ENCODE measurements at regions of chr11 and their contacts with region 1.

Region 1: DNA sequence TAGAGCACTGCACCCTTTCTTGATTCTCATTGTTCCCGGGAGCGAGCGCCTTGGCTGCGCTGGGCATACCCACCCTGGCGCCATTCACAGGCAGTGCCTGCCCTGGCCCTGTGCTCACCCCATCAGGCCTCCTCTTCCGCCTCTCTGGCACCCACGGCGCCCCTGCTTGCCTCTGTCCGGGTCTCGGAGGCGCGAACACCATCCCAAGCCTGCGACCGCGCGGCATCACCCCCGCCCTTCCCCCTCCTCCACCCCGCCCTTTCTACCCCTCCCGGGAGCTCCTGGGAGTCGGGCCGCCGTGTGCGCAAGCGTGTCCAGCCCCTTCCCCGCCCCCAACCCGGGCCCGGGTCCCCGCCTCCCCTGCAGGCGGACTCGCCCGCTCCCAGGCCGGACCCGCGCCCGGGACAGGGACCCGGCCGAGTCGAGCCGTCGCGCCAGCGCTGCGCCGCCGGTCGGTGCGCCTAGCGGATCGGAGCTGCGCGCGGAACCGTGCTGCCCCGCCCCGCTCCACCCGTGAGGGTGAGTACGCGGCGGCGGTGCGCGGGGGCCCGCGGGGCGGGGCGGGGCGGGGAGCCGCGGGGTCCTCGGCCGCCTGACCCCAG is at the start of gene ST3GAL4:
- DNase-seq: peak; percentile 79
- ATAC-seq: peak; percentile 80
- H3K4me3 Mint-ChIP-seq: peak within 1 kb of the TSS; percentile 95
- H3K27ac Mint-ChIP-seq: peak within 1 kb of the TSS; percentile 90
- H3K4me1 Mint-ChIP-seq: peaks cover 33% of the 10 kb centered on the region
- H3K27me3 Mint-ChIP-seq: no peaks in the 10 kb centered on the region
- total RNA-seq, gene ST3GAL4: 6.3 to 8.5 TPM

Region 2: GRCh38 chr11:126175393-126175792 is 180.0 kb before region 1 on chr11:
- POLR2A ChIA-PET with region 1: no interaction called
- DNase-seq: no peak
- ATAC-seq: no peak
- H3K4me3 Mint-ChIP-seq: no peak overlapping the region
- H3K27ac Mint-ChIP-seq: no peak overlapping the region
- H3K4me1 Mint-ChIP-seq: peaks cover 9% of the 10 kb centered on the region
- H3K27me3 Mint-ChIP-seq: no peaks in the 10 kb centered on the region

Region 3: DNA sequence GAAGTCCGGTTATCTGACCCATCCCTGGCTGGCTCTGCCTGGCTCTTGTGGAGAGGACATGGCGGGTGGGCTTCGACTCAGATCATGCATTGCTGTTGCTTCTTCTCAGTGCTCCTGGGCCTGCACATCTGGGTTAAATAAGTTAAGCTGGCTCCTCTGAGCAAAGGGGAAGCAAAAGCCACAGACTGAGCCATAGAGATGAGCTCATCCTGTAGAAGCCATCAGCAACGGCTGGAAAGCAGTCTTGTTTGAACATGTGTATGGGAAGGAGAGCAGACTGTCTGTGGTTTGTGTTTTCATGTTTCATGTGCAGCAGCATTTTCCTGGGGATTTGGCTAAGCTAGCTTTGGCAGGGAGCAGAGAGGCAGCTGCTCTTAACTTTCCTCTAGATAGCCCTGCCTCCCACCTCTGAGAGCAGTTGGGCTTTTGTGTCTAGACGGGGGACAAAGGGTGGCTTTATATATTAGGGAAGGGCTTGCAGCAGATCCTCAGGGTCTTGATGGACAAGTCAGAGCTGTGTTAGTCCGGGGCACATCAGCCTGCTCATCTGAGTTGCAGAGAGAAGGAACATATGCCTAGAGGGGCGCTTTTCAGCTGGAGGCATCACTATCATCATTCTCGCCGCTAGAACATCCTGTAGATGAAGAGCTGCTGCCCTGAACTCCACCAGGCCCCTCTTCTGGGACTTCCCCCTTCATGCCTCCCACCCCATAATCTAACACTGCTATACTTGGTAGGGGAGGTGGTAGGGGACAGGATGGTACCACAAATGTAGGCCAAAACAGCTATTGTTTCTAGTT is 36.7 kb before region 1 on chr11:
- POLR2A ChIA-PET with region 1: interaction called, 61 read pairs
- DNase-seq: peak; percentile 40
- ATAC-seq: peak; percentile 79
- H3K4me3 Mint-ChIP-seq: peak overlapping the region; percentile 77
- H3K27ac Mint-ChIP-seq: peak overlapping the region; percentile 93
- H3K4me1 Mint-ChIP-seq: peaks cover 34% of the 10 kb centered on the region
- H3K27me3 Mint-ChIP-seq: no peaks in the 10 kb centered on the region

Measured in activated naive CD8-positive, alpha-beta T cell treated with anti-CD3 and anti-CD28 coated beads, Interleukin-2, amount 10 ng/mL, durations not matched to agents 7 days and 5 days (primary cell).